ENCODE measurements at regions of chr7 and their contacts with region 1.

Region 1: DNA sequence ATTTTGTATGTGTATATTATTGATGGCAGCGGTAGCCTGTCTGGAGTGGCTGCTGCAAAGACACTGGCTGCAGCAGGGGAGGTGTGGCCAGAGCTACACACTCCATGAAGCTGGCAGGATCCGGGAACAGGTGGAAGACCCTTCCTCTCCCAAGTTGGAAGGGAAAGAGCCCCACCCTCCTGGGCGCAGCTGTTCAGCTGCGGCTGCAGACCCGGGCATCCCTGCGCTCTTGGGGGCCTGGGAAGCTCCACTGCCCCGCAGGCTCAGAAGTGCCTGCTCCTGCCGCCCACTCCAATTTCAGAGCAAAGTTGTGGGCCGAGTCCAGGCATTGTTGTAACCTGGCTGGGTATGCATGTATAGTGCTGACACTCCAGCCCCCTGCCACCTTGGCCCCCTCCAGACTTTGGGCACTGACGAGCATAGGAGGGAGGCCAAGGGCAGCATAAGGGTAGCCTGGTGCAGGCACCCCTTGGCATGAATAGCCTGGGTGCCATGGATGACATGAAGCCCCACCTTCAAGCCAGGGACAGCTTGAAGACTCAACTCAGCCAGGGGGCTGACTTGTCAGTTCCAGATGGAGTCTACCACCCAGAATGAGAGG is 90.7 kb upstream of the TMEM168 start:
- DNase-seq: no peak
- H3K4me3 ChIP-seq: no peak overlapping the region
- H3K4me3 Mint-ChIP-seq: no peak overlapping the region
- H3K27ac ChIP-seq: no peak overlapping the region
- H3K27ac Mint-ChIP-seq: no peak overlapping the region
- H3K4me1 ChIP-seq: no peaks in the 10 kb centered on the region
- H3K4me1 Mint-ChIP-seq: peaks cover 11 to 16% (median 14%) of the 10 kb centered on the region in 4 donors
- H3K27me3 ChIP-seq: no peaks in the 10 kb centered on the region
- H3K27me3 Mint-ChIP-seq: no peaks in the 10 kb centered on the region

Region 2: GRCh38 chr7:112869111-112869757 is 11.7 kb before region 1 on chr7:
- CTCF ChIA-PET with region 1: interaction called, 14 read pairs
- POLR2A ChIA-PET with region 1: no interaction called
- intact Hi-C with region 1: no loop called
- DNase-seq: peak; percentile 43 to 54 (median 45)
- H3K4me3 ChIP-seq: no peak overlapping the region
- H3K4me3 Mint-ChIP-seq: no peak overlapping the region
- H3K27ac ChIP-seq: no peak overlapping the region
- H3K27ac Mint-ChIP-seq: no peak overlapping the region
- H3K4me1 ChIP-seq: peaks cover 6% of the 10 kb centered on the region
- H3K4me1 Mint-ChIP-seq: peaks cover 21 to 56% (median 40%) of the 10 kb centered on the region in 4 donors
- H3K27me3 ChIP-seq: no peaks in the 10 kb centered on the region
- H3K27me3 Mint-ChIP-seq: no peaks in the 10 kb centered on the region